GM12878 (cell line): ENCODE measurements at regions of chr6 and their contacts with region 1.

Region 1: DNA sequence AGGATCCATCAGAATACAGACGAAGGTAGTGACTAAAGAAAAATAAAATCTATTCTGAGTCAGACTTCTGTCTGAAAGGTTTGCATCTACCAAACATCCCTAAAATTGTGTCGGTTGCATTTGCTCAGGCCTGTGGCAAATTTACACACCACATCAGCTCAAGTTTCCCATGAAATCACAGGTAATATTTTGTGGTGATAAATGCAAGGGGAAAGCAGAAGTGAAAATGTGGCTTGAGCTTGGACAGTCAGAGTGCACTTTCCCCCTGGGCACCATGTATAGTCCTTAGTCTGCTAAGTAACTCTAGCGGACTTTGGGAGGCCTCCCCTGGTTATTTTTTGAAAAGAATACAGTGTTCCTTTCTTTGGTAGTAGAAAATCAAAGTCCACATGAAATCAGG is 159.1 kb downstream of the PKHD1 start:
- DNase-seq: peak; percentile 40
- ATAC-seq: peak; percentile 86
- H3K4me3 ChIP-seq: no peak overlapping the region
- H3K27ac ChIP-seq: no peak overlapping the region
- H3K4me1 ChIP-seq: peaks cover 18% of the 10 kb centered on the region
- H3K27me3 ChIP-seq: no peaks in the 10 kb centered on the region
- CTCF ChIP-seq: no peak
- EP300 ChIP-seq: peak; percentile 63 to 71
- POLR2A ChIP-seq: no peak
- RAD21 ChIP-seq: no peak

Region 2: DNA sequence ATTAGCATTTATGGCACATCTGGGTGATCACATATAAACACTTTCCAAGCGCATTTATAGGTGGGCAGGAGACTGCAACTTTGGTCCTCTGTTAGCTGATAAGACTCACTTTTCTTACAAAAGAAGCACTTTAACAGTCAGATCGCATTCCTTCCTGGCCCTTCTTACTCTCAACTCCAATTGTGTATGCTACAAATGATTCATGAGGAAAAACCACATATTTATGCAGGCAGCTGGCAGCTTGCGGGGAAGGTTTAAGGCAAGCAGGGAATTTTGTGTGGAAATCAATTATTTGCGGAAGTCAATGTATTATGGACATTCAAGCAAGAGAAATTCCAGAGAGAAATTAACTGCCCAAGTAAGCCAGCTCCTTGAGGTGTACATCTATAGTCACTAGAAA is 35.0 kb before region 1 on chr6:
- CTCF ChIA-PET with region 1: interaction called, 3 read pairs
- POLR2A ChIA-PET with region 1: interaction called, 3 read pairs
- RAD21 ChIA-PET with region 1: interaction called, 4 read pairs
- SMC1A ChIA-PET with region 1: interaction called, 18 read pairs
- in situ Hi-C with region 1: no loop called
- intact Hi-C with region 1: no loop called
- DNase-seq: no peak
- ATAC-seq: no peak
- H3K4me3 ChIP-seq: no peak overlapping the region
- H3K27ac ChIP-seq: no peak overlapping the region
- H3K4me1 ChIP-seq: no peaks in the 10 kb centered on the region
- H3K27me3 ChIP-seq: no peaks in the 10 kb centered on the region
- CTCF ChIP-seq: no peak
- EP300 ChIP-seq: no peak
- POLR2A ChIP-seq: no peak
- RAD21 ChIP-seq: no peak

Region 3: GRCh38 chr6:51901766-51902764 is 26.3 kb before region 1 on chr6:
- CTCF ChIA-PET with region 1: interaction called, 5 read pairs
- POLR2A ChIA-PET with region 1: interaction called, 6 read pairs
- RAD21 ChIA-PET with region 1: interaction called, 7 read pairs
- SMC1A ChIA-PET with region 1: interaction called, 19 read pairs
- in situ Hi-C with region 1: no loop called
- intact Hi-C with region 1: no loop called
- DNase-seq: no peak
- ATAC-seq: peak; percentile 61
- H3K4me3 ChIP-seq: no peak overlapping the region
- H3K27ac ChIP-seq: no peak overlapping the region
- H3K4me1 ChIP-seq: no peaks in the 10 kb centered on the region
- H3K27me3 ChIP-seq: no peaks in the 10 kb centered on the region
- CTCF ChIP-seq: no peak
- EP300 ChIP-seq: no peak
- POLR2A ChIP-seq: no peak
- RAD21 ChIP-seq: no peak

Region 4: GRCh38 chr6:51908243-51908642 is 20.1 kb before region 1 on chr6:
- CTCF ChIA-PET with region 1: interaction called, 6 read pairs
- POLR2A ChIA-PET with region 1: interaction called, 5 read pairs
- RAD21 ChIA-PET with region 1: interaction called, 11 read pairs
- SMC1A ChIA-PET with region 1: interaction called, 7 read pairs
- in situ Hi-C with region 1: no loop called
- intact Hi-C with region 1: no loop called
- DNase-seq: no peak
- ATAC-seq: peak; percentile 48; the same call in 2 of the 3 replicates
- H3K4me3 ChIP-seq: no peak overlapping the region
- H3K27ac ChIP-seq: no peak overlapping the region
- H3K4me1 ChIP-seq: no peaks in the 10 kb centered on the region
- H3K27me3 ChIP-seq: no peaks in the 10 kb centered on the region
- CTCF ChIP-seq: no peak
- EP300 ChIP-seq: no peak
- POLR2A ChIP-seq: no peak
- RAD21 ChIP-seq: no peak